ENCODE measurements at regions of chr18 and their contacts with region 1.

Region 1: DNA sequence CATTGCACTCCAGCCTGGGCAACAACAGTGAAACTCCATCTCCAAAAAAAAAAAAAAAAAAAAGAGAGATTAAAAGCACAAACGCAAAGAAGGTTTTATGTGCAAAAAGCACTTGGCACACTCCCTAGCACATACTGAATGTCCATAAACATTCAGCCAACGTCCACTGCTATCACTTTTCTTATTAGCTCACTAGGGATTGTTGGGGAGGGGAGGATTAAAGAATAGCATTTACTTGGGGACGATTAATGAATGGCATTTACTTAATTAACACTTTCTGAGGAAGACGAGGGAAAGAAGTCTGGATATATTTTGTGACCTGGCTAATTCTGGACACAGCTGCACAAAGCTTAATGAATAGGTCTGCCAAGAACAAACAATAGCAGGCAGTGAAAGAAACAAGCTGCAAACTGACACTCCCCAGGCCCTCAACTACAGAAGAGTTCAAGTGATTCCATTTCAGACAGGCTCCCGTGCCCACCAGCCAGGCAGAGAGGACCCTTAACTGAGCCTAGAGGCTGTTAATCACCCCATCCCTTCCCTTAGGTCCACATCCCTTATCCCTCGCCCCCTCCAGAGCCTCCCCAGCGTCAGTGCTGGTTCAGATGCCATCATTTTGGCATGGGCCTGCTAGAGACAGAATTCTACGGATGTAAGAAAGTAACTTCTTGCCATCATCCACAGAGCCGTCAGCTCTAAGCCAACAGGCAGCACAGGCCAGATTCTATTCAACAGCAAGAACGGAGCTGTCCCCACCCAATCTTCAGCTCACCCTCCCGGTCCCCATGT is 7.4 kb downstream of the CYB5A start:
- DNase-seq: no peak
- ATAC-seq: no peak
- H3K4me3 ChIP-seq: no peak overlapping the region
- H3K27ac ChIP-seq: no peak overlapping the region
- H3K4me1 ChIP-seq: peaks cover 2% of the 10 kb centered on the region; the same call in 1 of the 2 replicates
- H3K27me3 ChIP-seq: no peaks in the 10 kb centered on the region
- CTCF ChIP-seq: no peak

Region 2: DNA sequence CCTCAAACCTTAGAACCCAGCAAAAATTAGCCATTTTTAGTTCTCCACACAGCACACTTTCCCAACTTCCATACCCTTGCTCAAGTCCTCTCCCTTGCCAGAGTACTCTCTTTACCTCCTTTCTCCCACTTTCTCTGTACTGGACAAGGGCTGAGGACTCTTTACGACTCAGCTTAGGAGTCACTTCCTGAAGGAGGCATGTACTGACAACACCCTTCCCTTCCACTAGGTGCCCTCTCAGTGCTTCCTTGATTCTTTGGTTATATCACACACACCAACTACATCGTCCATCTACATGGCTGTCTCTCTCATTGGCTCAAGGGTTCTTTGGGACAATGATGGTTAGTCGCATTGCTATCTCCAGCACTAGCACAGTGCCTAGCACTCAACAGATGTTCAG is 26.0 kb after region 1 on chr18:
- CTCF ChIA-PET with region 1: no interaction called
- POLR2A ChIA-PET with region 1: no interaction called
- in situ Hi-C with region 1: no loop called
- intact Hi-C with region 1: no loop called
- DNase-seq: peak; percentile 36
- ATAC-seq: peak; percentile 98
- H3K4me3 ChIP-seq: no peak overlapping the region
- H3K27ac ChIP-seq: no peak overlapping the region
- H3K4me1 ChIP-seq: no peaks in the 10 kb centered on the region
- H3K27me3 ChIP-seq: peaks cover 15% of the 10 kb centered on the region
- CTCF ChIP-seq: peak; percentile 67

Region 3: GRCh38 chr18:74505776-74506175 is 221.4 kb after region 1 on chr18:
- CTCF ChIA-PET with region 1: interaction called, 10 read pairs
- POLR2A ChIA-PET with region 1: interaction called, 8 read pairs
- in situ Hi-C with region 1: no loop called
- intact Hi-C with region 1: no loop called
- DNase-seq: no peak
- ATAC-seq: no peak
- H3K4me3 ChIP-seq: no peak overlapping the region
- H3K27ac ChIP-seq: no peak overlapping the region
- H3K4me1 ChIP-seq: no peaks in the 10 kb centered on the region
- H3K27me3 ChIP-seq: no peaks in the 10 kb centered on the region
- CTCF ChIP-seq: no peak